Thyroid gland (tissue), 4 donors: ENCODE measurements at regions of chr5 and their contacts with region 1.

Region 1: GRCh38 chr5:75734913-75735789 is 17.9 kb upstream of the POC5 start:
- DNase-seq: peak; percentile 59 to 77
- H3K4me3 ChIP-seq: no peak overlapping the region
- H3K27ac ChIP-seq: no peak overlapping the region
- H3K4me1 ChIP-seq: no peaks in the 10 kb centered on the region
- H3K27me3 ChIP-seq: no peaks in the 10 kb centered on the region
- CTCF ChIP-seq: peak; percentile 11 to 77 (median 53)
- POLR2A ChIP-seq: no peak

Region 2: GRCh38 chr5:75460942-75461610 is 274.1 kb before region 1 on chr5:
- intact Hi-C with region 1: no loop called
- DNase-seq: no peak
- H3K4me3 ChIP-seq: no peak overlapping the region
- H3K27ac ChIP-seq: peak overlapping the region in 2 of 3 donors; percentile 6 to 18
- H3K4me1 ChIP-seq: peaks cover 47 to 49% of the 10 kb centered on the region in 2 donors
- H3K27me3 ChIP-seq: no peaks in the 10 kb centered on the region
- CTCF ChIP-seq: no peak
- POLR2A ChIP-seq: no peak

Region 3: GRCh38 chr5:75701856-75702255 is 33.3 kb before region 1 on chr5:
- intact Hi-C with region 1: no loop called
- DNase-seq: peak; percentile 51 to 61
- H3K4me3 ChIP-seq: no peak overlapping the region
- H3K27ac ChIP-seq: no peak overlapping the region
- H3K4me1 ChIP-seq: no peaks in the 10 kb centered on the region
- H3K27me3 ChIP-seq: no peaks in the 10 kb centered on the region
- CTCF ChIP-seq: no peak
- POLR2A ChIP-seq: no peak

Region 4: GRCh38 chr5:75993183-75993582 is 258.0 kb after region 1 on chr5:
- intact Hi-C with region 1: no loop called
- DNase-seq: peak; percentile 3 to 24
- H3K4me3 ChIP-seq: no peak overlapping the region
- H3K27ac ChIP-seq: no peak overlapping the region
- H3K4me1 ChIP-seq: peaks cover 0 to 4% of the 10 kb centered on the region in 2 donors
- H3K27me3 ChIP-seq: no peaks in the 10 kb centered on the region
- CTCF ChIP-seq: no peak
- POLR2A ChIP-seq: no peak

Region 5: GRCh38 chr5:76175051-76175666 is 440.0 kb after region 1 on chr5:
- intact Hi-C with region 1: loop called (anchors 5 kb)
- DNase-seq: peak; percentile 63 to 70
- H3K4me3 ChIP-seq: no peak overlapping the region
- H3K27ac ChIP-seq: no peak overlapping the region
- H3K4me1 ChIP-seq: no peaks in the 10 kb centered on the region
- H3K27me3 ChIP-seq: no peaks in the 10 kb centered on the region
- CTCF ChIP-seq: peak; percentile 56 to 80 (median 66)
- POLR2A ChIP-seq: no peak